ENCODE measurements at regions of chr3 and their contacts with region 1.

Region 1: DNA sequence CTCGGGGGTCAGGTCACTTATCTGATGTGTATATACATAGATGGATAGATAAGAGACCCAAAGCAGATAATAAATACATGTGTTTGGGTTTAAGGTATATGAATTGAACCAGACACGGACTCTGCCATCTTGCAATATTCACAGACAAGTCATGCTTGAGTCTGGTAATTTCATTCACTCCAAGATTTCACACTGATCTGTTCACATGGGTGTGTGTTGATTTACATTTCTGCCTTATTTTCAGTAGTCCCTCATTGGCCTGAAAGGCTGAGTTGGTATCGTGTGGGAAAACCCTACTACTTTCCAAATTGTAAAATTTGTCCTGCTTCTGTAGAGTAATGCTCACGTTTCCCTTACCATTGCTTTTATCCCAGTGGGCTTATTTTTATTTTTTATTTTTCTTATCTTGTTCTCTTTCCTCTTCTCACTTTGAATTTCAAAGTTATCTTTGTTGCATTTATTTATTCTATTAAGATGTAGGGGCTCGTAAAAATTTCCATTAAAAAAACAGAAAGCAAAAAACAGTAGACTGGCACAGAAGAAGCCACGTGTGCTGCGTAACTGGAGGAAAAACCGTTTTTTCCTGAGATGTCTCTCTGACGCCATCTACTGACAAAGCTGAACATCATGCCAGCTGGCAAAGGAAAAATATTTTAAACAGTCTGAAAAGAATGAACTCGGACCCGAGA is 10.8 kb upstream of the MFSD1 start:
- DNase-seq: peak; percentile 71
- H3K4me3 ChIP-seq: peak overlapping the region in 1 of 3 experiments; percentile 3
- H3K27ac ChIP-seq: no peak overlapping the region
- H3K4me1 ChIP-seq: peaks cover 8% of the 10 kb centered on the region
- H3K27me3 ChIP-seq: no peaks in the 10 kb centered on the region
- CTCF ChIP-seq: peak; percentile 67 to 72
- POLR2A ChIP-seq: no peak

Region 2: DNA sequence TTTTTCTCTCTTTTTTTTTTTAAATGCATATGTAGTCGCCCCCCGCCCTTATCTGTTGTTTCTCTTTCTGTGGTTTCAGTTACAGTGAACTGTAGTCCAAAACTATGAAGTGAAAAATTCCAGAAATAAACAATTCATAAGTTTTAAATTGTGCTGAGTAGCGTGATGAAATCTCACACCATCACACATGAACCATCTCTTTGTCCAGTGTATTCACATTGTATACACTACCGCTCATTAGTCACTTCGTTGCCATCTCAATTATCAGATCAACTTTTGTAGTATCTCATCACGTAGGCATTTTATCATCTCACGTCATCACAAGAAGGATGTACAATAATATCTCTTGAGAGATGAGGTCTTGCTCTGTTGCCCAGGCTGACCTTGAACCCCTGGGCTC is 282.6 kb before region 1 on chr3:
- CTCF ChIA-PET with region 1: no interaction called
- POLR2A ChIA-PET with region 1: no interaction called
- dilution Hi-C with region 1: no loop called
- intact Hi-C with region 1: no loop called
- DNase-seq: no peak
- H3K4me3 ChIP-seq: no peak overlapping the region
- H3K27ac ChIP-seq: no peak overlapping the region
- H3K4me1 ChIP-seq: no peaks in the 10 kb centered on the region
- H3K27me3 ChIP-seq: no peaks in the 10 kb centered on the region
- CTCF ChIP-seq: no peak
- POLR2A ChIP-seq: no peak

Region 3: DNA sequence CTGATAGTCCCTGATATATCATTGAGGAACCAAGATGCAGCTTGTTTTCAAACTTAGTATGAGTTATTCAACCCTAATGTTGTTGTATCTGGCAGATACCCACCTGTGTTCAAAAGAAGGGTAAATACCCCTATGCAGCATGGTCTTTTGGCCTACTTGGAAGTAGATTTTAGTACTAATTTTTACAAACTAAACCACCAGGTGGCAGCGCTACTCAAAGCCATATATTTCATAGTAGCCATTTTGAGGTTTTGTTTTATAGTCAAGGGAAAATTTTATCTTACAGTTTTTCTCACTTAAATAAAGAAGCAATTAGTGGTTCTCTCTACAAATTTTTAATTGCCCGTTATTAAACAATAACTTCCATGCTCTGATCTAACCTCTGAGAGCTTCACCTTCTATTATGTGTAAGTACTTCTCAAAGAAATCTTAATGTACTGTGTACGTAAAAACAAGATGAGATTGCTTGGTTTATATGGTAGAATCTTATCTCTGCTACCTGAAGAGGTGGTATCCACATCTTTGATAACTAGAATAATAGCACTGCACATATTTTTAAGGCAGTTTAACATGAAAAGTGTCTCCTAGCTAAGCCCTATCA is 251.5 kb before region 1 on chr3:
- CTCF ChIA-PET with region 1: interaction called, 40 read pairs
- POLR2A ChIA-PET with region 1: no interaction called
- dilution Hi-C with region 1: no loop called
- intact Hi-C with region 1: loop called (anchors 1 kb)
- DNase-seq: peak; percentile 70
- H3K4me3 ChIP-seq: no peak overlapping the region
- H3K27ac ChIP-seq: no peak overlapping the region
- H3K4me1 ChIP-seq: no peaks in the 10 kb centered on the region
- H3K27me3 ChIP-seq: no peaks in the 10 kb centered on the region
- CTCF ChIP-seq: peak; percentile 37 to 41
- POLR2A ChIP-seq: no peak

Region 4: DNA sequence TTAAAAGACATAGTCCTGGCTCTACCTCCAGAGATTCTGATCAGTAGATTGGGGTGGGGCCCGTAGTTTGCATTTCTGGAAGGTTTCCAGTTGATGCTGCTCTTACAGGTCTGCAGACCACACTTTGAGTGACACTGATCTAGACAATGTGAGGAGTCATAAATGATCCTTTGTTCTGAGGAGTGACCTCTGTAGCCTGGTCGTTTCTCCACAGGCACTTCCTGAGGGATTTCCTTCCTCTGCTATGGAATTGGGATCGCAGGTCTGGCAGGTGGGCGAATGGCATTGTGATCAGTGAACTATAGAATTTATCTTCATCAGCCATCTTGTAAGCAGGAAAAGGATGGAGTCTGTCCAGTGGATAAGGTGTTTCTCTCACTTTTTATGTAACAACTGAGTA is 141.3 kb before region 1 on chr3:
- CTCF ChIA-PET with region 1: interaction called, 22 read pairs
- POLR2A ChIA-PET with region 1: no interaction called
- dilution Hi-C with region 1: no loop called
- intact Hi-C with region 1: loop called (anchors 2 kb)
- DNase-seq: peak; percentile 93
- H3K4me3 ChIP-seq: no peak overlapping the region
- H3K27ac ChIP-seq: peak overlapping the region; percentile 95
- H3K4me1 ChIP-seq: peaks cover 31% of the 10 kb centered on the region
- H3K27me3 ChIP-seq: no peaks in the 10 kb centered on the region
- CTCF ChIP-seq: no peak
- POLR2A ChIP-seq: peak; percentile 57

Region 5: DNA sequence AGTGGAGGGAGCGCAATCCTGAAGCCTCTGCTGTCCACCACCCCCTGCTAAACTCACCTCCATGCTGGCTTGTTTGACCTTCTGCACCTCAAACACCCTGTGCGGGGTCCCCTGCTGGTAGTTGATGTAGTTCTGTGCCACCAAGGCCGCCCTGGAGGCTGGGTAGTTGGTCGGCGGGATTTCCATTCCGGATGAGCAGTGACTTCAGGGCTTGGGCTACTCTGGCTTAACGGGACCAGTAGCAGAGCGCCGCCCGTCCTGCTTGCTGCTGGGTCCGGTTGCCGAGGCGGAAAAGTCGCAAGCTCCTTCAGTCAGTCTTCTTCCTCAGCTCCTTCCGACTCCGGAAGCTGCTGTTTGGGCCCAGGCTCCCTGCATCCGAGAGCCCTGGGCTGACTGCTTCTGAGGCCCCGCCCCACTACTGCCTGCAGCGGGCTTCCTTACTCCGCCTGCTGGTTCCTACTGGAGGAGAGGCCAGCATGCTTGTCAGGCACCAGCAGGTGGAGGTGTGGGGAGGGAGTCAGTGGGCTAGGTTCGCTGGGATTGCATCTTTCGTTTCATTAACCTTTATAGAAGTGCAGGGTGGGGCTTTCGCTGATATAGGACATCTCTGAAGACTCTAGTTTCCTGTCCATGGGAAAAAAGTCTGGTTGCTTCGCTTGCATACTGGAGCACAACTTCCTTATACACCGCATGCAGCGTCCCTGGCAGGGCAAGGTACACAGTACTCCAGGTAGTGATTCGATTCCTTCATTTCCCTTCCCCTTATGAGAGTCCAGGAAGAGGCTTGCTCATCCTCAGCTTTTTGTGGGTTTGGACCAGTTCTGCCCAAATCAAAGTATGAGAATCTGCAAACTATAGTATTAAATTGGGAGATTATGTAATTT is 118.5 kb before region 1 on chr3 and contains the start of gene LXN:
- CTCF ChIA-PET with region 1: interaction called, 11 read pairs
- POLR2A ChIA-PET with region 1: no interaction called
- dilution Hi-C with region 1: no loop called
- intact Hi-C with region 1: loop called (anchors 1 kb)
- DNase-seq: peak; percentile 92
- H3K4me3 ChIP-seq: peak within 1 kb of the TSS; percentile 39 to 90 (median 79)
- H3K27ac ChIP-seq: peak within 1 kb of the TSS; percentile 75
- H3K4me1 ChIP-seq: peaks cover 29% of the 10 kb centered on the region
- H3K27me3 ChIP-seq: no peaks in the 10 kb centered on the region
- CTCF ChIP-seq: peak; percentile 56 to 92
- POLR2A ChIP-seq: peak; percentile 87
- total RNA-seq, gene LXN: 118 and 119 TPM in 2 replicates

Region 6: GRCh38 chr3:158801696-158802408 is 10.8 kb after region 1 on chr3 and contains the start of gene MFSD1:
- CTCF ChIA-PET with region 1: interaction called, 32 read pairs
- POLR2A ChIA-PET with region 1: no interaction called
- dilution Hi-C with region 1: no loop called
- intact Hi-C with region 1: no loop called
- DNase-seq: peak; percentile 87
- H3K4me3 ChIP-seq: peak within 1 kb of the TSS; percentile 47 to 78 (median 72)
- H3K27ac ChIP-seq: peak within 1 kb of the TSS; percentile 27
- H3K4me1 ChIP-seq: peaks cover 16% of the 10 kb centered on the region
- H3K27me3 ChIP-seq: no peaks in the 10 kb centered on the region
- CTCF ChIP-seq: no peak
- POLR2A ChIP-seq: peak; percentile 87
- total RNA-seq, gene MFSD1: 38.2 and 38.3 TPM in 2 replicates

Region 7: GRCh38 chr3:158918008-158918407 is 127.0 kb after region 1 on chr3:
- CTCF ChIA-PET with region 1: no interaction called
- POLR2A ChIA-PET with region 1: no interaction called
- dilution Hi-C with region 1: no loop called
- intact Hi-C with region 1: loop called (anchors 5 kb)
- DNase-seq: peak; percentile 83
- H3K4me3 ChIP-seq: no peak overlapping the region
- H3K27ac ChIP-seq: peak overlapping the region; percentile 61
- H3K4me1 ChIP-seq: peaks cover 4% of the 10 kb centered on the region
- H3K27me3 ChIP-seq: no peaks in the 10 kb centered on the region
- CTCF ChIP-seq: peak; percentile 82 to 84
- POLR2A ChIP-seq: no peak

Measured in endothelial cell of umbilical vein (primary cell).